ENCODE measurements at regions of chr2 and their contacts with region 1.

Region 1: GRCh38 chr2:199459286-199460016 is 1.7 kb upstream of the SATB2 start:
- DNase-seq: peak; percentile 96
- H3K4me3 ChIP-seq: peak overlapping the region; percentile 91
- H3K27ac ChIP-seq: peak overlapping the region; percentile 95
- H3K4me1 ChIP-seq: peaks cover 20% of the 10 kb centered on the region
- H3K27me3 ChIP-seq: peaks cover 9% of the 10 kb centered on the region
- CTCF ChIP-seq: 0 out of 2 replicates have a peak, but pooled peaks have one; percentile 15

Region 2: GRCh38 chr2:199261239-199261638 is 198.2 kb before region 1 on chr2:
- CTCF ChIA-PET with region 1: no interaction called
- POLR2A ChIA-PET with region 1: no interaction called
- intact Hi-C with region 1: loop called (anchors 2 kb)
- DNase-seq: peak; percentile 90
- H3K4me3 ChIP-seq: no peak overlapping the region
- H3K27ac ChIP-seq: no peak overlapping the region
- H3K4me1 ChIP-seq: no peaks in the 10 kb centered on the region
- H3K27me3 ChIP-seq: no peaks in the 10 kb centered on the region
- CTCF ChIP-seq: peak; percentile 47

Region 3: GRCh38 chr2:199366406-199366805 is 93.0 kb before region 1 on chr2:
- CTCF ChIA-PET with region 1: no interaction called
- POLR2A ChIA-PET with region 1: no interaction called
- intact Hi-C with region 1: loop called (anchors 5 kb)
- DNase-seq: no peak
- H3K4me3 ChIP-seq: no peak overlapping the region
- H3K27ac ChIP-seq: no peak overlapping the region
- H3K4me1 ChIP-seq: no peaks in the 10 kb centered on the region
- H3K27me3 ChIP-seq: no peaks in the 10 kb centered on the region
- CTCF ChIP-seq: no peak

Region 4: DNA sequence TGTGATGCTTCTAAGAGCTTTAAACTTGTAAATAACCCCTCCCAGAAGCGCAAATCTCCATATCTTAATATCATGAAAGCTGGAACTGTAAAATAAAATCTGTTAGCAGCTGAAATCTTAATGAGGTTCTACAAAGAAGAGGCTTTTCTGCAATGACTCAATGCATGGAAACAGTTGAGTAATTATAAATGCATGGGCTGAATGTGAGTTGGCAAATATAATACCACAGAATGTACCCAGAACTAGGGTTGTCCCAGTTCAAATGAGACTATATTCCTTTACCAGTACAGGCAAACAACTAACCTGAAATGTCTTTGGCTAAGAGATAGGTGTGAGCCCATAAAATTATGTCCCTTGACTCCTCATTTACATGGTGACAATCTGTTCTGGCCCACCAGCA is 54.6 kb before region 1 on chr2:
- CTCF ChIA-PET with region 1: no interaction called
- POLR2A ChIA-PET with region 1: no interaction called
- intact Hi-C with region 1: loop called (anchors 5 kb)
- DNase-seq: no peak
- H3K4me3 ChIP-seq: no peak overlapping the region
- H3K27ac ChIP-seq: no peak overlapping the region
- H3K4me1 ChIP-seq: peaks cover 7% of the 10 kb centered on the region
- H3K27me3 ChIP-seq: no peaks in the 10 kb centered on the region
- CTCF ChIP-seq: no peak

Region 5: DNA sequence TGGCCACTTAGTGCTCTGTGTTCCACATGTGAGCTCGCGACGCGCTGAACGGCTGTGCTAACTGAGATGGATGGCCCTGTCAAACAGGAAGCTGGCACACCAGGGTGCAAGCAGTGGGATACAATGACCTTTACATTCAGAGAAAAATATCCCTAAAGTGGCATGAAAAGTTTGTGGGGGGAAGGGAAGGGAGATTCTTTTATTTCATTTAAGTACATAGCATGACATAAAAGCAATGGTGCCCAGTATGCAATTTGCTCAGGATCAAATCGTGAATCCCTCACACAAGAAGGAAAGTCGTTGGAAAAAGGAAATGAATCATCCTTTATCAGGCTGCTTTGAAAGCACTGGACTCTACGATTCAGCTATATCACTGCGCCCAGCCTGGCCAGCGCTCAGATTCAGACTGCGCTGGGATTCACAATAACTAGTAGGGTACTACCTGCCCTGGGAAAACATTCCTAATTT is 27.7 kb before region 1 on chr2:
- CTCF ChIA-PET with region 1: no interaction called
- POLR2A ChIA-PET with region 1: no interaction called
- intact Hi-C with region 1: loop called (anchors 2 kb)
- DNase-seq: peak; percentile 97
- H3K4me3 ChIP-seq: peak overlapping the region; percentile 14
- H3K27ac ChIP-seq: peak overlapping the region; percentile 57
- H3K4me1 ChIP-seq: peaks cover 39% of the 10 kb centered on the region
- H3K27me3 ChIP-seq: no peaks in the 10 kb centered on the region
- CTCF ChIP-seq: no peak

Region 6: DNA sequence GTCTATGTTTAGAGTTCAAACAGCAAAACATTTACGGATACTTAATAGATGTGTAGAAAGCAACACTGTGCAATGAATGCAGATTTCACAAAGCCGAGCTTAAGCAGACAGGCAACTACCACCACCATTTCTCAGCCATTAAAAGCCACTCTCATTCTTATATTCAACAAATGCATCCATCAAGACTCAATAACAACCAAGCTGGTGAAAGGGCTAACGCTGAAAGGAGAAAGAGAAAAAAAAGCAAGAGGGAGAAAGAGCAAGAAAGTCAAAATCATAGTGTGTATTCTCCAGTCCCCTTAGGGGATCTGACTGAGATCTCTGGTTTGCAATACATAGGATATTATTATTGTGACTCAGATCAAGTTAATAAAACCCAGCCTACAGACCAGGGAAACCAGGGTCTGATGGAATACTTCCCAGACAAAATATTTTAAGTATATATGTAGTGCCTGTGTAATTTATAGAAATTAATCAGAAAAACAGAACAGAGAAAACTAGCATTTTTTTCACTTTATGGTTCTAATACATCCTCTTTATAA is 15.8 kb before region 1 on chr2:
- CTCF ChIA-PET with region 1: no interaction called
- POLR2A ChIA-PET with region 1: no interaction called
- intact Hi-C with region 1: no loop called
- DNase-seq: no peak
- H3K4me3 ChIP-seq: no peak overlapping the region
- H3K27ac ChIP-seq: no peak overlapping the region
- H3K4me1 ChIP-seq: no peaks in the 10 kb centered on the region
- H3K27me3 ChIP-seq: no peaks in the 10 kb centered on the region
- CTCF ChIP-seq: no peak

Region 7: DNA sequence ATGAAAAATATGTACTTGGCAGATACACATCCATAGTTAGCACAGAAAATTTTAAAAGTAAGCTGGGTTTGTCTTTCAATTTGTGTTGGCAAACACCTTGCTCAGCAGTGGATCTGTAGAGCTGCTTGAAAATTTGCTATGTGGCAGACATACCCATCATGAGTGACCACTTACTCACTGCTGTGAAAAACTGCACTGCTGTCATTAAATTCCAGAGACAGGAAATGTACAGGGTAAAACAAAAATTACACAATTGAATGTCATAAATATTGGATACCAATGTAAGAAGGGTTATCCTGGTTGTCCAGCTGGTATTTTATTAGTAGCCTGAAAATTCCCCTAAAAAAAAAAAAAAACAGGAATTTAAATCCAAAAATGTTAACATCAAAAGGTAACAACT is 1454.2 kb after region 1 on chr2:
- CTCF ChIA-PET with region 1: no interaction called
- POLR2A ChIA-PET with region 1: no interaction called
- intact Hi-C with region 1: no loop called
- DNase-seq: no peak
- H3K4me3 ChIP-seq: no peak overlapping the region
- H3K27ac ChIP-seq: no peak overlapping the region
- H3K4me1 ChIP-seq: no peaks in the 10 kb centered on the region
- H3K27me3 ChIP-seq: no peaks in the 10 kb centered on the region
- CTCF ChIP-seq: no peak

Measured in A673 (cell line).